HepG2 (cell line): ENCODE measurements at regions of chr6 and their contacts with region 1.

Region 1: DNA sequence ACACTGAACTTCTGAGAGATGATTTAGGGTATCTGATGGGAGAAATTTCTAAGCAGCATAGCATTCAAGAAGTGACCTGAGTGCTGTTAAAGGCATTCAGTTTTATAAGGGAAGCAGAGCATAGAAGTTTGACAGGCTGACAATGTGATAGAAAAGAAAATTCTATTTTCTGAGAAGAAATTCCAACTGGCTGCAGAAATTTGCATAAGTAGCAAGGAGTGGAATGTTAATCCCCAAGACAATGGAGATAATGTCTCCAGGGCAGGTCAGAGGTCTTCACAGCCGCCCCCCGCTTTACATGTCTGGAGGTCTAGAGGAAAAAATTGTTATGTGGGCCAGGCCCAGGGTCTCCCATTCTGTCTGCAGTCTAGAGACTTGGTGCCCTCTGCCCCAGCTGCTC is 1361.8 kb upstream of the EYS start:
- DNase-seq: no peak
- ATAC-seq: no peak; the same call in 1 of the 3 replicates
- H3K4me3 ChIP-seq: no peak overlapping the region
- H3K27ac ChIP-seq: no peak overlapping the region
- H3K4me1 ChIP-seq: no peaks in the 10 kb centered on the region
- H3K27me3 ChIP-seq: no peaks in the 10 kb centered on the region
- CTCF ChIP-seq: no peak
- EP300 ChIP-seq: no peak
- POLR2A ChIP-seq: no peak
- RAD21 ChIP-seq: no peak

Region 2: DNA sequence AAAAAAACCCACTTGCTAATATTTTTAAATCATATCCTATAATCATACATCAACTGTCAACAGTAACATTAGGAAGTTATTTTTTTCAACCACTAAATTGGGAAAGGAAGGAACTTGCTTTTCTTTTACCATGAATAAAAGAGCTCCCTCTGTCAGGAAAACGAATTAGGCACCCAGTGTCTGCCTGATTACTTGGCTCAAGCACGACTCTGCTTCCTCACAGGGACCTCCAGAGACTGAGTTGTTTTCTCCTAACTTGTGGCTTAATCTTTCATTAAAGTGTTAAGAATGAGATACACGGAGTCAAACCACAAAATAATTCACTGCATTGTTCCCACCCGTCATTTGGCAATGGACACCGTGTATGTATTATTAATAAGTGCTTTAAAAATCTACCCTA is 43.3 kb after region 1 on chr6:
- CTCF ChIA-PET with region 1: no interaction called
- POLR2A ChIA-PET with region 1: no interaction called
- in situ Hi-C with region 1: no loop called
- intact Hi-C with region 1: no loop called
- DNase-seq: no peak
- ATAC-seq: no peak
- H3K4me3 ChIP-seq: no peak overlapping the region
- H3K27ac ChIP-seq: no peak overlapping the region
- H3K4me1 ChIP-seq: no peaks in the 10 kb centered on the region
- H3K27me3 ChIP-seq: no peaks in the 10 kb centered on the region
- CTCF ChIP-seq: no peak
- EP300 ChIP-seq: no peak
- POLR2A ChIP-seq: no peak
- RAD21 ChIP-seq: no peak

Region 3: GRCh38 chr6:67694120-67694519 is 625.3 kb after region 1 on chr6:
- CTCF ChIA-PET with region 1: no interaction called
- POLR2A ChIA-PET with region 1: no interaction called
- in situ Hi-C with region 1: no loop called
- intact Hi-C with region 1: loop called (anchors 1 kb)
- DNase-seq: peak; percentile 7
- ATAC-seq: no peak; the same call in 2 of the 3 replicates
- H3K4me3 ChIP-seq: no peak overlapping the region
- H3K27ac ChIP-seq: no peak overlapping the region
- H3K4me1 ChIP-seq: no peaks in the 10 kb centered on the region
- H3K27me3 ChIP-seq: no peaks in the 10 kb centered on the region; a peak in 1 of 5 replicates
- CTCF ChIP-seq: no peak
- EP300 ChIP-seq: no peak
- POLR2A ChIP-seq: no peak
- RAD21 ChIP-seq: no peak

Region 4: GRCh38 chr6:68226460-68226859 is 1157.7 kb after region 1 on chr6:
- CTCF ChIA-PET with region 1: no interaction called
- POLR2A ChIA-PET with region 1: no interaction called
- in situ Hi-C with region 1: no loop called
- intact Hi-C with region 1: loop called (anchors 5 kb)
- DNase-seq: no peak
- ATAC-seq: no peak
- H3K4me3 ChIP-seq: no peak overlapping the region
- H3K27ac ChIP-seq: no peak overlapping the region
- H3K4me1 ChIP-seq: no peaks in the 10 kb centered on the region
- H3K27me3 ChIP-seq: no peaks in the 10 kb centered on the region
- CTCF ChIP-seq: 0 out of 2 replicates have a peak, but pooled peaks have one; percentile 15
- EP300 ChIP-seq: no peak
- POLR2A ChIP-seq: no peak
- RAD21 ChIP-seq: no peak